ENCODE measurements at regions of chr2 and their contacts with region 1.

Region 1: GRCh38 chr2:74119912-74120825 is 27.5 kb downstream of the BOLA3 start:
- DNase-seq: peak; percentile 97
- H3K4me3 ChIP-seq: peak overlapping the region; percentile 74 to 84
- H3K27ac ChIP-seq: peak overlapping the region; percentile 90 to 92
- H3K4me1 ChIP-seq: no peaks in the 10 kb centered on the region; a peak in 1 of 4 replicates
- H3K27me3 ChIP-seq: no peaks in the 10 kb centered on the region
- CTCF ChIP-seq: peak; percentile 59
- EP300 ChIP-seq: peak in 1 of 2 experiments; percentile 26; a peak in 1 of 4 replicates
- RAD21 ChIP-seq: no peak

Region 2: GRCh38 chr2:73828818-73829570 is 291.2 kb before region 1 on chr2 and contains the start of gene STAMBP:
- CTCF ChIA-PET with region 1: interaction called, 10 read pairs
- POLR2A ChIA-PET with region 1: interaction called, 6 read pairs
- DNase-seq: peak; percentile 94
- H3K4me3 ChIP-seq: peak within 1 kb of the TSS; percentile 86 to 96
- H3K27ac ChIP-seq: peak within 1 kb of the TSS; percentile 87 to 88
- H3K4me1 ChIP-seq: peaks cover 14 to 19% of the 10 kb centered on the region in 2 experiments; a peak in 3 of 4 replicates
- H3K27me3 ChIP-seq: no peaks in the 10 kb centered on the region
- CTCF ChIP-seq: no peak
- EP300 ChIP-seq: no peak
- RAD21 ChIP-seq: no peak
- polyA plus RNA-seq, gene STAMBP: 42.2 and 54.5 TPM in 2 replicates

Region 3: DNA sequence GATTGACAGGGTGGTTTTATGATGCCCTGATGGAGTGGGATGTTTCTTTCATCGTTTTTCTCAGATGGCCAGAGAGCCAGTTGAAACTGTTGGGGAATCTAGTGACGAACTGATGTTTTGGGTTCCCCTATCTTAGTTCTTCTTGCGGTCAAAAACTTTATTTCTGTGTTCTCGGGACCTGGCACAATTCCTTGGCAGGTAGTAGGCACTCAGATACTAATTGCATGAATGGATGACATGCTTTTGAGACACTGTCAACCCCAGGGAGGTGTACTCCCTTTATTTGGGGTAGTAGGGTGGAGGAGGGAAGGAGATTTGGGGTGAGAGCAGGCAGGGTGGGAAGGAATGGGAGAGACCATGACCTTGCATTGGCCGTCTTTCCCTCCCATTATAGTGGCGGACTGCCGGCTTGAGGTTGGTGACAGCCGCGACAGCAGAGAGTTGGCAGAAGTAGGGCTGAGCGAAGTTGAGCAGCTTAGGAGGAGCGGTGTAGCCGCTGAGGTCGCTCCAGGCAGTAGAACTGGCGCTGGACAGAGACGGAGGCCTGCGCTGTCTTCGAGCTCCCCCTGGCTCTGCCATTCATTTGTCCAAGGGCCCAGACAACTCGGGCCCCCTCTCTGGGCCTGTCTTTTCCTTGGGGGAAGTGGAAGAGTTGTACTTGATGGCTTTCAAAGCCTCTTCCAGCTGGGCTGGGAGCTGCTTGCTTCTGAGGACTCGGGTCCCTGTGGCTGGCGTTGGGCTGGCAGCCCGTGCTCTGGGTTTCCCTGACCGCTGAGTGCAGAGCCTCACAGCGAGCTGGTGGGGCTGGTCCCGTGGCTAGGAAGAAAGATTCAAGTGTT is 132.8 kb before region 1 on chr2:
- CTCF ChIA-PET with region 1: interaction called, 10 read pairs
- POLR2A ChIA-PET with region 1: interaction called, 9 read pairs
- DNase-seq: peak; percentile 62
- H3K4me3 ChIP-seq: peak overlapping the region; percentile 41 to 42
- H3K27ac ChIP-seq: 0 out of 4 replicates have a peak overlapping the region, but pooled peaks of 1 of the 2 experiments have one; percentile 34
- H3K4me1 ChIP-seq: peaks cover 6 to 46% of the 10 kb centered on the region in 2 experiments; a peak in 3 of 4 replicates
- H3K27me3 ChIP-seq: no peaks in the 10 kb centered on the region
- CTCF ChIP-seq: peak; percentile 45
- EP300 ChIP-seq: no peak
- RAD21 ChIP-seq: peak; percentile 59

Region 4: DNA sequence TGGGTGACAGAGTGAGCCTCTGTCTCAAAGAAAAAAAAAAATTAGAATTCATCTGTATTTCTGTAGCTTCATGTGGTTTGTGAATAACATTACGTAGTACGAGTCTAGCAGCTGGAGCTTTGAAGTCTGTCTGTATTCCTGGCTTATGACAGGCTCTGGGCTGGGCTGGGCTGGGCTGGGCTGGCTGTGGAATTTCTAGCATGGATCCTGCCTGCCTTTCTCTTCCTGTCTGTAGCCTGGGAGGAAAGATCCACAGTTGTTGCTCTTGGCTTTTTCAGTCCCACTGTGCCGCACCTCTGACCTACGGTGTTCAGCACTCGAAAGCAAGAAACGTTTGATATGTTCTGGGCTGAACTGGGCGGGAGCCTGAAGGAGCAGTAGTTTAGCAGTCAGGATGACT is 27.9 kb before region 1 on chr2:
- CTCF ChIA-PET with region 1: no interaction called
- POLR2A ChIA-PET with region 1: no interaction called
- DNase-seq: no peak
- H3K4me3 ChIP-seq: no peak overlapping the region
- H3K27ac ChIP-seq: no peak overlapping the region
- H3K4me1 ChIP-seq: no peaks in the 10 kb centered on the region
- H3K27me3 ChIP-seq: no peaks in the 10 kb centered on the region
- CTCF ChIP-seq: no peak
- EP300 ChIP-seq: no peak
- RAD21 ChIP-seq: no peak

Region 5: DNA sequence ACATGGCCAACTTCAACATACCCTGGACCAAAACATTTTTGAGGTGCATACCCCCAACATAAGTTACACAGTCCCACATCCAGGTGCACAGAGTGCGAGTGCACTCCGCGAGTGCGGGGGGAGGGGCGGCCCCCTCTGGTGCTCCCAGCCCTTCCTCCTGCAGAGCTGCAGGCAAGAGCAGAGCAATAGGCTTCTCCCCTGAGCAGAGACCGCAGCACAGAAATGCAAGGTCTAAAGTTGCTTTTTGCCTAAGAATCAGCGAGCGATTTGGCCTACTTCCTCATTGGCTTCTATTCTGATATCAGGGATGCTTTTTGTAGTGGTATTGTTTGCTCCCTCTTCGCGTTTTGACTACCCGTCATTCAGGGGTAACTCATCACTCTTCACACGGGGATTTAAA is 13.1 kb before region 1 on chr2:
- CTCF ChIA-PET with region 1: interaction called, 13 read pairs
- POLR2A ChIA-PET with region 1: interaction called, 7 read pairs
- DNase-seq: no peak
- H3K4me3 ChIP-seq: no peak overlapping the region
- H3K27ac ChIP-seq: no peak overlapping the region
- H3K4me1 ChIP-seq: no peaks in the 10 kb centered on the region
- H3K27me3 ChIP-seq: no peaks in the 10 kb centered on the region
- CTCF ChIP-seq: no peak
- EP300 ChIP-seq: no peak
- RAD21 ChIP-seq: no peak

Region 6: GRCh38 chr2:74130163-74130995 is 10.2 kb after region 1 on chr2:
- CTCF ChIA-PET with region 1: interaction called, 4 read pairs
- POLR2A ChIA-PET with region 1: interaction called, 11 read pairs
- DNase-seq: no peak
- H3K4me3 ChIP-seq: no peak overlapping the region
- H3K27ac ChIP-seq: no peak overlapping the region
- H3K4me1 ChIP-seq: no peaks in the 10 kb centered on the region
- H3K27me3 ChIP-seq: no peaks in the 10 kb centered on the region
- CTCF ChIP-seq: no peak
- EP300 ChIP-seq: no peak
- RAD21 ChIP-seq: no peak

Region 7: GRCh38 chr2:74206180-74206688 is 86.1 kb after region 1 on chr2:
- CTCF ChIA-PET with region 1: no interaction called
- POLR2A ChIA-PET with region 1: no interaction called
- DNase-seq: no peak
- H3K4me3 ChIP-seq: no peak overlapping the region
- H3K27ac ChIP-seq: no peak overlapping the region
- H3K4me1 ChIP-seq: peaks cover 0 to 12% of the 10 kb centered on the region in 2 experiments; a peak in 2 of 4 replicates
- H3K27me3 ChIP-seq: no peaks in the 10 kb centered on the region
- CTCF ChIP-seq: no peak
- EP300 ChIP-seq: no peak
- RAD21 ChIP-seq: no peak

Measured in SK-N-SH (cell line).